ENCODE measurements at regions of chr12 and their contacts with region 1.

Region 1: GRCh38 chr12:56189176-56189917 is at the start of gene SMARCC2:
- DNase-seq: peak; percentile 95
- H3K4me3 ChIP-seq: peak within 1 kb of the TSS; percentile 83
- H3K27ac ChIP-seq: peak within 1 kb of the TSS; percentile 82
- H3K4me1 ChIP-seq: peaks cover 13% of the 10 kb centered on the region
- H3K27me3 ChIP-seq: no peaks in the 10 kb centered on the region
- CTCF ChIP-seq: peak; percentile 74
- total RNA-seq, gene SMARCC2: 133 and 140 TPM in 2 replicates

Region 2: GRCh38 chr12:54259194-54260011 is 1929.9 kb before region 1 on chr12:
- CTCF ChIA-PET with region 1: interaction called, 14 read pairs
- POLR2A ChIA-PET with region 1: no interaction called
- intact Hi-C with region 1: no loop called
- DNase-seq: peak; percentile 97
- H3K4me3 ChIP-seq: peak overlapping the region; percentile 50
- H3K27ac ChIP-seq: peak overlapping the region; percentile 87
- H3K4me1 ChIP-seq: peaks cover 59% of the 10 kb centered on the region
- H3K27me3 ChIP-seq: no peaks in the 10 kb centered on the region
- CTCF ChIP-seq: no peak

Region 3: DNA sequence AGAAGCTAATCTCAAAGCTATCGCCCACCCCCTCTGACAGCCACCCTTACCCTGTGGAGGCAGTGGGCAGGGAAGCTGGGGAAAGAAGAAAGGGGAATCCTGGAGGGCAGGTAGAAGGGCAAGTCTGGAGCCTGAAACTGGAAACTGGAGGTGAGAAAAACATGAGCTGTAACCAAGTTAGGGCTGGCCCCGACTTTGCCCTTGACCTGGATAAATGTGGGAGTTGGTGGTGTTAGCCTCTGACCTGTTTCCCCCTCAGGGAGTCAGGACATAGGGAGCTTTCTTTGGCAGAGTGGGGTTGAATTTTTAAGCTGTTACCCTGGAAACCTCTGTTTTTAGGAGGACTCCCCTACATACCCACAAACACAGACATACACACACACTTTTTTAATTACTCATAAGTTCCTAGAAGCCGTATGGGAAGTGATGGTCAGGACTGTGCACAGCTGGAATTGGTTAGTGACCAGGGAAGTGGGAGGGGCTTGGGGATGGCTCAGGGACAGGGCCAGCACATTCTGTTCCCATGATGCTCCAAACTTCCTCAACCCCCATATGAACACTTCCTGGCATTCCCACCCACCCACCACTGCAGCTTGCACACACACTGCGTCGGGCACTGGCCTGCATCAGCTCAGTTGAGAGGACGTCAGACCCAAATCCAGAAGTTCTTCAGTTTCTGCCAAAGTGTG is 341.6 kb before region 1 on chr12:
- CTCF ChIA-PET with region 1: no interaction called
- POLR2A ChIA-PET with region 1: no interaction called
- intact Hi-C with region 1: no loop called
- DNase-seq: peak; percentile 77
- H3K4me3 ChIP-seq: no peak overlapping the region
- H3K27ac ChIP-seq: peak overlapping the region; percentile 46
- H3K4me1 ChIP-seq: peaks cover 21% of the 10 kb centered on the region
- H3K27me3 ChIP-seq: no peaks in the 10 kb centered on the region
- CTCF ChIP-seq: no peak

Region 4: GRCh38 chr12:56127888-56128669 is 61.3 kb before region 1 on chr12 and contains the start of gene ESYT1:
- CTCF ChIA-PET with region 1: interaction called, 15 read pairs
- POLR2A ChIA-PET with region 1: no interaction called
- intact Hi-C with region 1: loop called (anchors 2 kb)
- DNase-seq: peak; percentile 100
- H3K4me3 ChIP-seq: peak within 1 kb of the TSS; percentile 72
- H3K27ac ChIP-seq: peak within 1 kb of the TSS; percentile 76
- H3K4me1 ChIP-seq: peaks cover 21% of the 10 kb centered on the region
- H3K27me3 ChIP-seq: no peaks in the 10 kb centered on the region
- CTCF ChIP-seq: no peak
- total RNA-seq, gene ESYT1: 90.0 and 107 TPM in 2 replicates

Region 5: DNA sequence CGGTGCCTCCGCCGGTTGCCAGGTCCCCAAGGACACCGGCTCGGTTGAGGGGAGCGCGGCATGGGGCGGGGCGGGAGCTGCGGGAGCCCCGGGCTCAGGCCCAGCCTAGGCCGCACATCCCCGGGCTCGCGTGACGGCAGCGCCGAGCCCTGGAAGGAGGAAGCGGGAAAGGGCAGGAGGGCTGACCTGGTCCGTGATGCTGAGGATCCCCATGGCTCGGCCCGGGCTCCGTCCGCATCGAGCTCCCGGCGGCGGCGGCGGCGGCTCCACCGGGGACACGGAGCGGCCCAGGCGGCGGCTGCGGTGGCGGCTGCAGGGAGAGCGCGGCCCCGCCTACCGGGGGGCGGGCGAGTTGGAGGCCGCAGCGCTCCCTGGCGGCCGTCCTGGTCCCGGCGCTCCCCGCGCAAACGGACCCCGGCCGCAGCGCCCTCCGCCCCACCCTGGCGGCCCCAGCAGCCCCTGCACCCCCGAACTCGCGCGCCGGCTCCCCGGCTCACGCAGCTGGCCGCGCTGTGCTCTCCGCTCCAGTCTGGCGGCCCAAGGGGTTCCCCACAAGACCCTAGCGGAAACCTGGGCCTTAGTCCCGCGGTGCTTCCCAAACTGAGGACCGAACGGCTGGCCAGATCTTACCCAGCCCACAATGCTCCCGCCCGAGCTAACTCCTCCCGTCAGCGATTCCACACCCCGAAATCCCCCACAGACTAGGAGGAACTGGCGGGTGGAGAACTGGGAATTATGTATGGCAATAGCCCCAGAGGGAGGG is 68.9 kb after region 1 on chr12 and contains the start of gene ANKRD52:
- CTCF ChIA-PET with region 1: interaction called, 3 read pairs
- POLR2A ChIA-PET with region 1: no interaction called
- intact Hi-C with region 1: loop called (anchors 1 kb)
- DNase-seq: peak; percentile 89
- H3K4me3 ChIP-seq: peak within 1 kb of the TSS; percentile 99
- H3K27ac ChIP-seq: peak within 1 kb of the TSS; percentile 91
- H3K4me1 ChIP-seq: peaks cover 20% of the 10 kb centered on the region
- H3K27me3 ChIP-seq: no peaks in the 10 kb centered on the region
- CTCF ChIP-seq: peak; percentile 54; the same call in 1 of the 2 replicates
- total RNA-seq, gene ANKRD52: 74.6 and 74.7 TPM in 2 replicates

Region 6: GRCh38 chr12:58086057-58086456 is 1896.7 kb after region 1 on chr12:
- CTCF ChIA-PET with region 1: interaction called, 10 read pairs
- POLR2A ChIA-PET with region 1: no interaction called
- intact Hi-C with region 1: no loop called
- DNase-seq: no peak
- H3K4me3 ChIP-seq: no peak overlapping the region
- H3K27ac ChIP-seq: no peak overlapping the region
- H3K4me1 ChIP-seq: no peaks in the 10 kb centered on the region
- H3K27me3 ChIP-seq: no peaks in the 10 kb centered on the region
- CTCF ChIP-seq: no peak

Measured in A673 (cell line).